ENCODE measurements at regions of chr3 and their contacts with region 1.

Region 1: GRCh38 chr3:169286214-169286613 is 377.3 kb downstream of the MECOM start:
- DNase-seq: no peak
- H3K4me3 ChIP-seq: no peak overlapping the region
- H3K27ac ChIP-seq: no peak overlapping the region
- H3K4me1 ChIP-seq: peaks cover 20% of the 10 kb centered on the region
- H3K27me3 ChIP-seq: no peaks in the 10 kb centered on the region
- CTCF ChIP-seq: no peak
- POLR2A ChIP-seq: no peak

Region 2: DNA sequence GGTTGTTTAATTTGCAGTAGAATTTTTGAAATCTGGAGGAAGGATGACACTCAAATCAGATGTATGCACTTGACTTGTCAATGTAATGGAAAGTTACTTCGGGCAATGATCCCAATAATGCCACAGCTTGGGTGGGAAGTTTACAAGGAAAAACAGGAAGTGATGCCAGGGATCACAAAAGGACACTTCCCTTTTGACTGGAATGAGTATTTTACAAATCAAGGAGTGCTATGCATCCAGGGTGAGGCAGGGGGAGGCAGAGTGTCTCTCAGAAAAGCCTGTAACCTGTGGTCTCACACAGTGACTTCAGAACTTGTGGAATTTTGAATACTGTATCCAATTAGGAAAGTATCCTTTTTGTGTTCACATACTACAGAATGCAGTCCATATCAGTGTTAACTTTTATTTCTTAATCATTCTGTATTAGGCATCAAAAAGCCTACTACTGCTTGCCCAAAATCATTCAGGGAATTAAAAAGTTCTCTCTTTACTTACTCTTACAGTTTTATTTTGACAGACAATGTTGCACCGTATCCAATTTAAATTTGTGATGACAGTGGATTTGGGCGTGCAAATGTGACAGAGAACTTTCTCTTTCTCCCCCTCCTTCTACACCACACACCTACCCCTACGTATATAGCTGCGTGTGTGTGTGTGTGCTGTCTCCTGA is 67.8 kb before region 1 on chr3:
- CTCF ChIA-PET with region 1: interaction called, 6 read pairs
- POLR2A ChIA-PET with region 1: no interaction called
- dilution Hi-C with region 1: no loop called
- intact Hi-C with region 1: loop called (anchors 2 kb)
- DNase-seq: peak; percentile 98
- H3K4me3 ChIP-seq: no peak overlapping the region
- H3K27ac ChIP-seq: peak overlapping the region; percentile 66
- H3K4me1 ChIP-seq: peaks cover 23% of the 10 kb centered on the region
- H3K27me3 ChIP-seq: no peaks in the 10 kb centered on the region
- CTCF ChIP-seq: peak; percentile 74 to 89
- POLR2A ChIP-seq: no peak

Measured in endothelial cell of umbilical vein (primary cell).